PC-9 (cell line): ENCODE measurements at regions of chr12 and their contacts with region 1.

Region 1: GRCh38 chr12:110330544-110330943 is 49.5 kb downstream of the ATP2A2 start:
- DNase-seq: no peak
- H3K4me3 ChIP-seq: no peak overlapping the region
- H3K27ac ChIP-seq: peak overlapping the region; percentile 28
- H3K4me1 ChIP-seq: no peaks in the 10 kb centered on the region
- H3K27me3 ChIP-seq: no peaks in the 10 kb centered on the region
- CTCF ChIP-seq: no peak

Region 2: DNA sequence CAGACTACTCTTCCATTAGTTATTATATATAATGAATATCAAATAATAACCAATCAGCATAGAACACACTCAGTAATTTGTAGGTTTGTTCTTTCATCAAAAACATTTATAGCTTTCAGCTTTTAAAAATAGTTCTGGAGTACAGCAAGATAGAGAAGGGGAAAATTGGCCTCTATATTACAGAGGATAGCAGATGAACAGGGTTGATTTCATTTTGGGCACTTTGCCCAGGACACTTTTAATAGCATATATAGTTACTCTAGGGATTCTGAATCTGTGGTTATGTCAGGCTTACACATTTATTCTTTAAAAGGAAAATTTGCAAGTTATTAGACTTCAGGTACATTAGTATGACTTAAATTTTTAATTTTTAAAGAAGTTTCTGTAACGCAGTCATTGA is 153.8 kb before region 1 on chr12:
- CTCF ChIA-PET with region 1: no interaction called
- POLR2A ChIA-PET with region 1: interaction called, 10 read pairs
- intact Hi-C with region 1: no loop called
- DNase-seq: no peak
- H3K4me3 ChIP-seq: no peak overlapping the region
- H3K27ac ChIP-seq: no peak overlapping the region
- H3K4me1 ChIP-seq: no peaks in the 10 kb centered on the region
- H3K27me3 ChIP-seq: no peaks in the 10 kb centered on the region
- CTCF ChIP-seq: no peak

Region 3: GRCh38 chr12:110355073-110355472 is 24.5 kb after region 1 on chr12:
- CTCF ChIA-PET with region 1: no interaction called
- POLR2A ChIA-PET with region 1: no interaction called
- intact Hi-C with region 1: no loop called
- DNase-seq: no peak
- H3K4me3 ChIP-seq: no peak overlapping the region
- H3K27ac ChIP-seq: no peak overlapping the region
- H3K4me1 ChIP-seq: no peaks in the 10 kb centered on the region
- H3K27me3 ChIP-seq: no peaks in the 10 kb centered on the region
- CTCF ChIP-seq: peak; percentile 47; the same call in 1 of the 2 replicates

Region 4: DNA sequence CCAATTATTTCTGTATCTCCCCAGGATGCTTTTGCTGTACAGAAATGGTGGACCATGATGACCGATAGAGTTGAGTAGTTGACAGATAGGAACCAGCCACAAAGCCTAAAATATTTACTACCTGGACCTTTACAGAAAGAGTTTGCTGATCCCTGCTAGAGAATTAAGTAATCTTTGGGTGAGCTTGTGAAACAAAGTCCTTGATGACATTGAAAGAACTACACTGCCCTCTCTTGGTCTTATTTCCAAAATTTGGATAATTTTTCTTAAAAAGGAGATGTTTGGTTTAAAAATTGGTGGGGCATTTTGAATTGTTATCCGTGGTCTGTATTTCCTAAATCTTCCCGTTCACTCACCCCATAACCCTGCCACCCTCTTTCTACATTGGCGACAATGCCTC is 269.7 kb after region 1 on chr12:
- CTCF ChIA-PET with region 1: no interaction called
- POLR2A ChIA-PET with region 1: no interaction called
- intact Hi-C with region 1: no loop called
- DNase-seq: peak in 1 of 2 experiments; percentile 58
- H3K4me3 ChIP-seq: no peak overlapping the region
- H3K27ac ChIP-seq: no peak overlapping the region
- H3K4me1 ChIP-seq: no peaks in the 10 kb centered on the region
- H3K27me3 ChIP-seq: no peaks in the 10 kb centered on the region
- CTCF ChIP-seq: peak; percentile 85